Endothelial cell of umbilical vein (primary cell): ENCODE measurements at regions of chr4 and their contacts with region 1.

Region 1: DNA sequence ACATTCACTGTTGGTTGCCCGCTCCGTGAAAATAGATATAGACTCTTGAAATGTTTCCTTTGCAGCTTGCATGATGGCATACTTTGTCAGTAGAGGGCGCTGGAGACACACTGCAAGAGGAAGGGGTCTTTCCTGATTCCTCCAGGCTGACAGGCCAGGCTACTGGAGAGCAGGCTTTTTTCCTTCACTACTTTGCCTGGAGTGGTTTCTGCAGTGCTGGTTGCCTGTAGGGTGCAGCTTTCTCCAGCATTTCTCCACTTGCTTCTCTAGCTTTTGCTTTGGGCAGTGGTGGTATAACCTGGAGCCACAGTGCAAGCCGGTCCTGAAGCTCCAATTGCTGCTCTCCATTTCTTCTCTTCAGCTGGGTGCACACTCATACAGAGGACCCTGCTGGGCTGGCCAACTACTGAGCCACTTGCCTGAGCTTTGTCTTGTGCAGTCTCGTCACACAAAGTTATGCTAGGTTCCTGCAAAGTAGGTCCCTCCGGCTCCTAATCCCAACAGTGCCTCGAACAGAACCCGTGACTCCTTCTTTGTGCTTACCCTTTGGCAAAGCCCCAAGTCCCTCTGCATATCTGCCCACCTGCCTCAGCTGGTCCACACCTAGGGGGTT is 46.3 kb downstream of the RASSF6 start:
- DNase-seq: peak; percentile 73
- H3K4me3 ChIP-seq: no peak overlapping the region
- H3K27ac ChIP-seq: no peak overlapping the region
- H3K4me1 ChIP-seq: no peaks in the 10 kb centered on the region
- H3K27me3 ChIP-seq: no peaks in the 10 kb centered on the region
- CTCF ChIP-seq: peak; percentile 80 to 87
- POLR2A ChIP-seq: no peak

Region 2: DNA sequence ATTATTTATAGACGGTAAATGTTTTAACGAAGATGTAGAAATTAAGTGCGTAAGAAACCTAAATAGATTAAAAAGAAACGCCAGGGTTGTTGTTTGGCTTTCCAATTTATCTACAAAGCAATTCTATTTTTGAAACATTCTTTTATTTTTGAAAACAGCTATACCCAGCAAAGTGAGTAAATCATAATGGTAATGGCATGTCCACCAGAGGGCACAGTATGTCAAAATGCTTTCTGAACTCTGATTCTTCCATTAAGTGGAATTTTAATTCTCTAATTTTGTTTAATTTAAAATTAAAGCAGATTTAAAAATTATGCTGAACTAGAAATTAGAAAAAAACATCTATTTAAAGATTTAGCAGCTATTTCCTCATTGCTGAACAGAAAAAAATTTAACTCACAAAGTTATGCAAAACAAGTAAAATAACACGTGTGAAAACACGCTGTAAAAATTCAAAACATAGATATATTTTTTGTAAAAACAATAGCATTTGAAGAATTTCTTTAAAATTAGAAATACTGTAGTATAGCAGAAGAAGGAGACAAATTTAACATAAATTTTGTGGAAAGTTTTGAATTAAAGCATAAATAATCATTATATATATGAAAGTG is 19.8 kb after region 1 on chr4:
- CTCF ChIA-PET with region 1: interaction called, 16 read pairs
- POLR2A ChIA-PET with region 1: no interaction called
- dilution Hi-C with region 1: no loop called
- intact Hi-C with region 1: no loop called
- DNase-seq: peak; percentile 55
- H3K4me3 ChIP-seq: no peak overlapping the region
- H3K27ac ChIP-seq: no peak overlapping the region
- H3K4me1 ChIP-seq: no peaks in the 10 kb centered on the region
- H3K27me3 ChIP-seq: no peaks in the 10 kb centered on the region
- CTCF ChIP-seq: peak; percentile 33 to 42
- POLR2A ChIP-seq: no peak

Region 3: GRCh38 chr4:73922766-73923630 is 349.1 kb after region 1 on chr4:
- CTCF ChIA-PET with region 1: interaction called, 5 read pairs
- POLR2A ChIA-PET with region 1: no interaction called
- dilution Hi-C with region 1: no loop called
- intact Hi-C with region 1: loop called (anchors 1 kb)
- DNase-seq: peak; percentile 76
- H3K4me3 ChIP-seq: no peak overlapping the region
- H3K27ac ChIP-seq: no peak overlapping the region
- H3K4me1 ChIP-seq: peaks cover 10% of the 10 kb centered on the region
- H3K27me3 ChIP-seq: no peaks in the 10 kb centered on the region
- CTCF ChIP-seq: peak; percentile 9 to 14
- POLR2A ChIP-seq: no peak

Region 4: DNA sequence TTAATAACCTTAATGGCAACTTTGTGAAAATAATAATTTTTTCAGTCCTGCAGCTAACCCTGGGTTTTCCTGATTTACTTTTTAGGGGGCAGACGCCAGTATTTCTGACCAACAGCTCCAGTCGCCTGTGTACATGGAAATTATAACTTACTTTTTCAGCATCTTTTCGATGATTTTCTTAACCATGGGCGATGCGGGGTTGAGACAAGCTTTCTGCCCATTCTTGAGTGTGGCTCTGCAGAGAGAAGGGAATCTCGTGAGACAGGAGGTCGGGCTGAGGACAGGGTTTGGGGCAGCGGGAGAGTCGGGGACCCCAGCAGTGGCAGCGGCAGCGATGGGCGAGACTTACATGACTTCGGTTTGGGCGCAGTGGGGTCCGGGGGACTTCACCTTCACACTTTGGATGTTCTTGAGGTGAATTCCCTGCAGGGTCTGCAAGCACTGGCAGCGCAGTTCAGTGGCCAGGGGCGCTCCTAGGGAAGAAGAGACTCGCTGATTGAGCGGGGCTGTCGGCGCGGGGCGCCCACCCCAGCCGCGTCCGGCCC is 524.6 kb after region 1 on chr4:
- CTCF ChIA-PET with region 1: interaction called, 11 read pairs
- POLR2A ChIA-PET with region 1: no interaction called
- dilution Hi-C with region 1: no loop called
- intact Hi-C with region 1: no loop called
- DNase-seq: peak; percentile 38
- H3K4me3 ChIP-seq: peak overlapping the region; percentile 46 to 85 (median 69)
- H3K27ac ChIP-seq: peak overlapping the region; percentile 83
- H3K4me1 ChIP-seq: peaks cover 32% of the 10 kb centered on the region
- H3K27me3 ChIP-seq: no peaks in the 10 kb centered on the region
- CTCF ChIP-seq: no peak
- POLR2A ChIP-seq: no peak